IMR-90 (cell line): ENCODE measurements at regions of chr14 and their contacts with region 1.

Region 1: GRCh38 chr14:56339855-56340701 is 221.9 kb downstream of the PELI2 start:
- DNase-seq: peak; percentile 98
- ATAC-seq: peak; percentile 87
- H3K4me3 ChIP-seq: no peak overlapping the region
- H3K27ac ChIP-seq: peak overlapping the region; percentile 93
- H3K4me1 ChIP-seq: peaks cover 32% of the 10 kb centered on the region
- H3K27me3 ChIP-seq: no peaks in the 10 kb centered on the region
- CTCF ChIP-seq: peak; percentile 97
- POLR2A ChIP-seq: no peak
- RAD21 ChIP-seq: peak; percentile 99

Region 2: DNA sequence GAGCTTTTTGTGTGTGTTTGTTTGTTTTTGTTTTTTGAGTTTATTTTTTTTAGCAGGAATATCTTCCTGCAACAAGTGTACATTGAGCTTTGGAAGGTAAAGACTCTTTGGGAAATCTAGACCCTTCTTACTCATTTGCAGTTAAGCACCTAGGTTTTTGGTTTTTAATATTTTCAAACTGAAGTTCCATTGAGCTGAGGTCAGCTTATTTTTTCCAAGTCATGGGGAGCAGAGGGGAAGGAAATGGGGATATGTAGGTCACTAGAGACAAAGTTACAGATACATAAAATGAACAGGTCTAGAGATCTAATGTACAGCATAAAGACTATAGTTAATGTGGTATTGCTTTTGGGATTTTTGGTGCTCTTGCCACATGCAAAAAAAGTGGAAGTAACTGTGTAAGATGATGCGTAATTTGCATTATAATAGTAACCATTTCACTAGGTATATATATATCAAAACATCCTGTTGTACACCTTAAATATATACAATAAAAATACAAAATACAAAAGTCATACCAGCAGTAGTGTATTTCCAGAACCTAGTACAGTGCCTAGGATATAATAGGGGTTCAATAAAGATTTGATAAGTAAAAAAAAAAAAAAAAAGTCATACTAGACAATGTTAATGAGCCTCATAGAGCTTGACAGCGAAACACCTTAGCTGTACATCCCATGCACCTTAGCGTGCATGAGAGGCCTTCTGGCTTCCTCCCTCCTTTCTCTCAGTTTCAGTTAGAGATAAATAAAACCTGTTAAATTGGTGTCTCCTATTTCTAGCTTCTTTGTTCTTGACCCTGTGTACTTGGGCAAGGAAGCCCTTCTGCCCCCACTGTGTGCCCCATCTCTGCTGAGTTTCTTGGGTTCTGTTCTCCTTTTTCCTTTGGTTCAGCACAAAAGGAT is 1807.7 kb before region 1 on chr14:
- CTCF ChIA-PET with region 1: no interaction called
- POLR2A ChIA-PET with region 1: no interaction called
- dilution Hi-C with region 1: no loop called
- in situ Hi-C with region 1: no loop called
- intact Hi-C with region 1: no loop called
- DNase-seq: no peak
- ATAC-seq: no peak
- H3K4me3 ChIP-seq: no peak overlapping the region
- H3K27ac ChIP-seq: no peak overlapping the region
- H3K4me1 ChIP-seq: peaks cover 2% of the 10 kb centered on the region
- H3K27me3 ChIP-seq: no peaks in the 10 kb centered on the region
- CTCF ChIP-seq: no peak
- POLR2A ChIP-seq: no peak
- RAD21 ChIP-seq: no peak

Region 3: DNA sequence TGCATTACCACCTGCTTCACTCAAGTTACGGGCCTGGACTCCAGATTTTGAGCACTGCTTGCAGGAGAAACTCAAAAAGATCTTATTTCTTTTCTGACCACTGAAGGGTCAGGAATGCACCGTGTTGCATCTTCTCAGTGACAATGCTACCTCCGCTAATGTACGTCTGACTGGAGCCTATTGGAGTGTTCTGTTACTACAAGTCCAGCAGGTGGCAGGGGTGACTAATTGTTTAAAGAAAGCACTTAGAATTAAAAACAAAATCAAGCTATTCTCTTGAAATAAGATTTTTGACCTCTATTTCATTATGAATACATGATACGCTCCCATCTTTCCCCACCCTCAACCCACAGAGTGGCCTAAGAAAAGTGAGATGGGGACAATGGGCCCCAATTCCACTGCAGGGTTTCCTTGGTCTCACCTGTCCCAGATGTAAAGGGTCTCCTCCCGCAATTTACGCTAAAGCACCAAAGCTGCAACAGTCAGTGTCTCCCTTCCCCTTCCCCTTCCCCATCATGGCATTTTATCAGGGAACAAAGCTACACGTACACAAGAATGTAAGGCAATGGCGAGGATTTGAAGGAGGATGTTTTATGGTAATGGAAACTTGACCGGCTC is 901.9 kb before region 1 on chr14:
- CTCF ChIA-PET with region 1: no interaction called
- POLR2A ChIA-PET with region 1: no interaction called
- dilution Hi-C with region 1: no loop called
- in situ Hi-C with region 1: loop called (anchors 25 kb)
- intact Hi-C with region 1: loop called (anchors 2 kb)
- DNase-seq: peak; percentile 73
- ATAC-seq: peak; percentile 85
- H3K4me3 ChIP-seq: no peak overlapping the region
- H3K27ac ChIP-seq: no peak overlapping the region
- H3K4me1 ChIP-seq: no peaks in the 10 kb centered on the region
- H3K27me3 ChIP-seq: peaks cover 12% of the 10 kb centered on the region
- CTCF ChIP-seq: peak; percentile 64
- POLR2A ChIP-seq: no peak
- RAD21 ChIP-seq: peak; percentile 65

Region 4: GRCh38 chr14:55707365-55707804 is 632.7 kb before region 1 on chr14:
- CTCF ChIA-PET with region 1: interaction called, 4 read pairs
- POLR2A ChIA-PET with region 1: no interaction called
- dilution Hi-C with region 1: no loop called
- in situ Hi-C with region 1: loop called (anchors 5 kb)
- intact Hi-C with region 1: loop called (anchors 1 kb)
- DNase-seq: peak; percentile 76
- ATAC-seq: peak; percentile 81
- H3K4me3 ChIP-seq: no peak overlapping the region
- H3K27ac ChIP-seq: no peak overlapping the region
- H3K4me1 ChIP-seq: peaks cover 4% of the 10 kb centered on the region
- H3K27me3 ChIP-seq: no peaks in the 10 kb centered on the region
- CTCF ChIP-seq: peak; percentile 82
- POLR2A ChIP-seq: no peak
- RAD21 ChIP-seq: peak; percentile 91

Region 5: GRCh38 chr14:55846826-55847446 is 493.1 kb before region 1 on chr14:
- CTCF ChIA-PET with region 1: interaction called, 3 read pairs
- POLR2A ChIA-PET with region 1: no interaction called
- dilution Hi-C with region 1: no loop called
- in situ Hi-C with region 1: loop called (anchors 10 kb)
- intact Hi-C with region 1: loop called (anchors 5 kb)
- DNase-seq: peak; percentile 50
- ATAC-seq: no peak
- H3K4me3 ChIP-seq: no peak overlapping the region
- H3K27ac ChIP-seq: no peak overlapping the region
- H3K4me1 ChIP-seq: peaks cover 18% of the 10 kb centered on the region
- H3K27me3 ChIP-seq: no peaks in the 10 kb centered on the region
- CTCF ChIP-seq: no peak
- POLR2A ChIP-seq: no peak
- RAD21 ChIP-seq: no peak

Region 6: GRCh38 chr14:56117765-56118610 is 222.1 kb before region 1 on chr14 and contains the start of gene PELI2:
- CTCF ChIA-PET with region 1: interaction called, 5 read pairs
- POLR2A ChIA-PET with region 1: interaction called, 4 read pairs
- dilution Hi-C with region 1: no loop called
- in situ Hi-C with region 1: no loop called
- intact Hi-C with region 1: loop called (anchors 1 kb)
- DNase-seq: peak; percentile 73
- ATAC-seq: peak; percentile 82
- H3K4me3 ChIP-seq: peak within 1 kb of the TSS; percentile 59
- H3K27ac ChIP-seq: peak within 1 kb of the TSS; percentile 79
- H3K4me1 ChIP-seq: peaks cover 8% of the 10 kb centered on the region
- H3K27me3 ChIP-seq: no peaks in the 10 kb centered on the region
- CTCF ChIP-seq: peak; percentile 37; the same call in 1 of the 2 replicates
- POLR2A ChIP-seq: peak; percentile 93
- RAD21 ChIP-seq: peak; percentile 32
- total RNA-seq, gene PELI2: 31.7 and 36.7 TPM in 2 replicates

Region 7: GRCh38 chr14:56247468-56248200 is 92.4 kb before region 1 on chr14:
- CTCF ChIA-PET with region 1: interaction called, 6 read pairs
- POLR2A ChIA-PET with region 1: no interaction called
- dilution Hi-C with region 1: no loop called
- in situ Hi-C with region 1: no loop called
- intact Hi-C with region 1: loop called (anchors 2 kb)
- DNase-seq: peak; percentile 31
- ATAC-seq: no peak
- H3K4me3 ChIP-seq: no peak overlapping the region
- H3K27ac ChIP-seq: no peak overlapping the region
- H3K4me1 ChIP-seq: peaks cover 9% of the 10 kb centered on the region; the same call in 1 of the 2 replicates
- H3K27me3 ChIP-seq: no peaks in the 10 kb centered on the region
- CTCF ChIP-seq: peak; percentile 43
- POLR2A ChIP-seq: no peak
- RAD21 ChIP-seq: peak; percentile 38

Region 8: DNA sequence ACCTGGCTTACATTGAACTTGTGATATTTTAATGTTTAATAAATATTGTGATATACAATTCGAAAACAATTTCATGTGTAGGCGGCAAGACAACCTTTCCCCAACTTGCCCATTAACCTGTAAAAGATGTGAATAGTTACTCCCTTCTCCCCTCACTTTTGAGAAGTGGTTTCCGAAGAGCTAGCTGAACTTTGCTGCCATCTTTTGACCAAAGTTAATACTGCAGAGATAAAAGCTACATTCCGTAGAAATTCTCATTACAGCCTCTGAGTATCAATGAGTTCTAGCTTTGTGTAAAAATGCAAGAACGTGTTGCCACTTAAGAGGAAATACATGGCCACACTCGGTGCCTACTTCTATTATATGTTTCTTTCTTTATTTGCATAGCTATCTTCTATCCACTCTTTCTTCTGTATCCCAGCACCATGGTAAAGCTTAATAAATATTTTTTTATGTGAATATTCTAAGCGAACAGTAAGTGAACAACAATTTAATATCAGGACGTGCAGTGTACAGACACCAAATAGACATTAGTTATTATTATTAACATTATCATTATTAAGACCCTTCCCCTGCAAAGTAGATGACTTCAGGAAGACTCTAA is 134.4 kb after region 1 on chr14:
- CTCF ChIA-PET with region 1: no interaction called
- POLR2A ChIA-PET with region 1: no interaction called
- dilution Hi-C with region 1: no loop called
- in situ Hi-C with region 1: no loop called
- intact Hi-C with region 1: loop called (anchors 2 kb)
- DNase-seq: peak; percentile 41
- ATAC-seq: peak; percentile 81
- H3K4me3 ChIP-seq: no peak overlapping the region
- H3K27ac ChIP-seq: no peak overlapping the region
- H3K4me1 ChIP-seq: no peaks in the 10 kb centered on the region
- H3K27me3 ChIP-seq: peaks cover 24% of the 10 kb centered on the region
- CTCF ChIP-seq: peak; percentile 87
- POLR2A ChIP-seq: no peak
- RAD21 ChIP-seq: peak; percentile 97

Region 9: DNA sequence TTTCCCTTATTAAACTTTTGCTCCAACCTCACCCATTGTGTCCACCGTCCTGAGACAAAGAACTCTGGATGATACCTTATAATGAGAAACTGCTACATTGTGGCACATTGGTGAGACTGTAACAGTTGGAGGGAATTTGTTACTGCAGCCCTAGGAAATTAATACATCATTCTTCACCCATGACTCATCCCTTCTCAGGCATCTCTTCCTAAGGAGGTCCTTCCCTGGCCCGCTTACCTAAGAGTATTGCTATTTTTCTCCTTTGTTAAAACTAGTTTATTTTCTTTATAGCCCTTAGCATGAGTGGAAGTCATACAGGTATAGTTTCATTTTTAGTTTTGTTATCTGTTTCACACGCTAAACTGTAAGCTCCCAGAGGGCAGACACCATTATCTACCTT is 326.6 kb after region 1 on chr14:
- CTCF ChIA-PET with region 1: no interaction called
- POLR2A ChIA-PET with region 1: no interaction called
- dilution Hi-C with region 1: no loop called
- in situ Hi-C with region 1: no loop called
- intact Hi-C with region 1: no loop called
- DNase-seq: peak; percentile 69
- ATAC-seq: peak; percentile 80
- H3K4me3 ChIP-seq: no peak overlapping the region
- H3K27ac ChIP-seq: no peak overlapping the region
- H3K4me1 ChIP-seq: no peaks in the 10 kb centered on the region
- H3K27me3 ChIP-seq: peaks cover under 1% of the 10 kb centered on the region; the same call in 1 of the 2 replicates
- CTCF ChIP-seq: no peak
- POLR2A ChIP-seq: no peak
- RAD21 ChIP-seq: no peak